Prostate gland (tissue), 2 donors: ENCODE measurements at regions of chr1 and their contacts with region 1.

Region 1: DNA sequence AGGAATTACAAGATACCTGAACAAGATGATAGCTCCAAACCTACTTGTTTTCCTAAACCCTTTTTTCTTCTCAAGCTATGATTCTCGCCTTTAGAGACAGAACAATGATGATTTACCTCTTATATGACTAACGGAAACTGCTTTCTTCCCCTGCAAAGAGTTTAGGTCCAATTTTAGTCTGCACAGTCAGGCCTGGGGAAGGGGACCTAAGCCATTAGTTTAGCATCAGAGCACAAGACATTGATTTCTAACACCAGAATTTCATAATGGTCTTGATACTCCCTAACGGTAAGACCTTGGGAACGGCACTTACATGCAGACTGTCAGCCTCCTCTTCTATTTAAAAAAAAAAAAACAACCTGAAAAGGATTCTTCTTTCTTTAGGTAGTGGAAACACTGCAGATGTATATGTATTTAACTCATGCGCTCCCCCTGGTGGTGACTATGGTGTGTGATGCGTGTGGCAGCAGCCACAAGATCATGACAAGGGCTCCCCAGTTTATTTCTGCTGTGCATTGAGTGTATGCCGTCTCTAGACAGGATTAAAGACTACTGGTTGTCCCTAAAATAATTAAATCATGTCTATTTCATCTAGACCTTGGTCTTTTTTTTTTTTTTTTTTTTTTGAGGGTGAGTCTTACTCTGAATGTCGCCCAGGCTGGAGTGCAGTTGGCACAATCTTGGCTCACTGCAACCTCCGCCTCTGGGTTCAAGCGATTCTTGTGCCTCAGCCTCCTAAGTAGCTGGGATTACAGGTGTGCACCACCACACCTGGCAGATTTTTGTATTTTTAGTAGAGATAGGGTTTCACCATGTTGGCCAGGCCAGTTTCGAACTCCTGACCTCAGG is 37.3 kb upstream of the TMEM222 start:
- DNase-seq: peak; percentile 88
- H3K4me3 ChIP-seq: no peak overlapping the region
- H3K27ac ChIP-seq: no peak overlapping the region
- H3K4me1 ChIP-seq: no peaks in the 10 kb centered on the region
- H3K27me3 ChIP-seq: no peaks in the 10 kb centered on the region
- CTCF ChIP-seq: peak; percentile 63 to 89 (median 77)
- POLR2A ChIP-seq: no peak

Region 2: GRCh38 chr1:27102707-27103491 is 181.8 kb before region 1 on chr1:
- intact Hi-C with region 1: loop called (anchors 2 kb)
- DNase-seq: peak; percentile 66
- H3K4me3 ChIP-seq: no peak overlapping the region
- H3K27ac ChIP-seq: no peak overlapping the region
- H3K4me1 ChIP-seq: peaks cover 6% of the 10 kb centered on the region
- H3K27me3 ChIP-seq: no peaks in the 10 kb centered on the region
- CTCF ChIP-seq: peak; percentile 91 to 99 (median 98)
- POLR2A ChIP-seq: no peak

Region 3: GRCh38 chr1:27154991-27155781 is 129.5 kb before region 1 on chr1 and contains the start of gene SLC9A1:
- intact Hi-C with region 1: no loop called
- DNase-seq: peak; percentile 92
- H3K4me3 ChIP-seq: peak within 1 kb of the TSS; percentile 72 to 75
- H3K27ac ChIP-seq: peak within 1 kb of the TSS; percentile 87 to 90
- H3K4me1 ChIP-seq: peaks cover 34% of the 10 kb centered on the region
- H3K27me3 ChIP-seq: no peaks in the 10 kb centered on the region
- CTCF ChIP-seq: peak; percentile 29 to 86 (median 65)
- POLR2A ChIP-seq: peak; percentile 96
- total RNA-seq, gene SLC9A1: 22.9 to 30.4 TPM

Region 4: DNA sequence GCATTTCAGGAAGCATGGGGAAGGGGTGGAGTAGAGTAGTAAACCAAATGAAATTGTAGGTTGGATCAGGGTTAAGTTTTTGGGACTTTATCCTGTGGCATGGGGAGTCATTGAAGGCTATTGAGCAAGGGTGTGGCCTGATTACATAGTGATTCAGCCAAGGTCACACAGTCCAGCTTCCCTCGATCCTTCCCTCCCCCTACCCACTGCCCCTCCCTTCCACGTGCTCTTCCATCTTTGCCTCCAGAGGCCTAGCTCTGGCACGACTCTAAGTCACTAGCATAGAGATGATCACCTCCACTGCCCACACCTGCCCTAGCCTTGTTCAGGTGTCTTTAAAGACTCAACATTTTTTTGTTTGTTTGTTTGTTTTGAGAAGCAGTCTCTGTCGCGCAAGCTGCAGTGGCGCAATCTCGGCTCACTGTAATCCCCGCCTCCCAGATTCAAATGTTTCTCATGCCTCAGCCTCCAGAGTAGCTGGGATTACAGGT is 92.6 kb before region 1 on chr1:
- intact Hi-C with region 1: loop called (anchors 5 kb)
- DNase-seq: no peak
- H3K4me3 ChIP-seq: no peak overlapping the region
- H3K27ac ChIP-seq: no peak overlapping the region
- H3K4me1 ChIP-seq: no peaks in the 10 kb centered on the region
- H3K27me3 ChIP-seq: no peaks in the 10 kb centered on the region
- CTCF ChIP-seq: no peak
- POLR2A ChIP-seq: no peak